H1 (cell line): ENCODE measurements at regions of chr2 and their contacts with region 1.

Region 1: DNA sequence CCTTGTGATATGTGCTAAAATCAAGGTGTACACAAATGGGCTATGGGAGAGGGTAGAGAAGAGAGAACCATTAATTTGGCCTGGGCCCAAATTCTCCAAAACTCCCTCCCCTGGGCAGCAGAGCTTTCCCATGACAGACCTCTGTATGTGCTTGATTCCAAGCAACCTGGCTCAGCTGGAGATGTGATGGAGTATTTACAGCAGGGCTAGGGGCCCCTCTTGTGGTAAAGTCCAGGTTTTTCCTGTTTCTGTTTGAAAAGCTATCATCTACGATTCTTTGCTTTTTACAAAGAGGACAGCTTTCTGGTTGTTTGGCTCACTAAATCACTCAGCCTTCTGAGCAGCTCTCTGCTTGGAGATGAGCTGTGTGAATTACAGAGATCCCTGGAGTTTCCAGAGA is 40.3 kb downstream of the KCNS3 start:
- DNase-seq: no peak
- H3K4me3 ChIP-seq: no peak overlapping the region
- H3K27ac ChIP-seq: no peak overlapping the region
- H3K4me1 ChIP-seq: peaks cover 2 to 11% (median 5%) of the 10 kb centered on the region in 4 experiments; a peak in 5 of 7 replicates
- H3K27me3 ChIP-seq: no peaks in the 10 kb centered on the region
- CTCF ChIP-seq: peak in 2 of 3 experiments; percentile 38 to 52; a peak in 3 of 4 replicates
- EP300 ChIP-seq: no peak
- POLR2A ChIP-seq: no peak
- RAD21 ChIP-seq: peak; percentile 77 to 85

Region 2: GRCh38 chr2:17780546-17780945 is 138.2 kb before region 1 on chr2:
- CTCF ChIA-PET with region 1: no interaction called
- POLR2A ChIA-PET with region 1: no interaction called
- DNase-seq: no peak
- H3K4me3 ChIP-seq: no peak overlapping the region
- H3K27ac ChIP-seq: no peak overlapping the region
- H3K4me1 ChIP-seq: no peaks in the 10 kb centered on the region
- H3K27me3 ChIP-seq: no peaks in the 10 kb centered on the region
- CTCF ChIP-seq: no peak
- EP300 ChIP-seq: no peak
- POLR2A ChIP-seq: no peak
- RAD21 ChIP-seq: no peak

Region 3: DNA sequence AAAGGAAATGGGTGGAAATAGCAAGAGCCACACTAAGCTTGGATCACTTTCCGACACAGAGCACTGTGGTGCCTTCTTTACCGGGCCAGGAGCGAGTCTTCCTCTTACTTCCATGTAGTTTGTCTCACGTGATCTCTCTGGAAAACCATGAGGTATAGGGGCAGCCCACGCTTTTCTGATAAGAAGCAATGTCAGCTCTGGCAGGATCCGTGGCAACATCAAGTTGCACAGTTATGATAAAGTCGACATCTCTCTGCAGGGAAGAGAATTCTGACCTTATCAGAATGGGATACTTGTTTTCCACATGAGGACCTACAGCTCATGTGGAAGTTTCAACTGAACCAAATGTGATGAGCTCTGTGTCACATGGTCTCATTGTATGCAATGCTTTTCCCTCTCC is 73.0 kb before region 1 on chr2:
- CTCF ChIA-PET with region 1: interaction called, 76 read pairs
- POLR2A ChIA-PET with region 1: no interaction called
- DNase-seq: no peak
- H3K4me3 ChIP-seq: no peak overlapping the region
- H3K27ac ChIP-seq: no peak overlapping the region
- H3K4me1 ChIP-seq: no peaks in the 10 kb centered on the region
- H3K27me3 ChIP-seq: no peaks in the 10 kb centered on the region
- CTCF ChIP-seq: no peak
- EP300 ChIP-seq: no peak
- POLR2A ChIP-seq: no peak
- RAD21 ChIP-seq: no peak

Region 4: DNA sequence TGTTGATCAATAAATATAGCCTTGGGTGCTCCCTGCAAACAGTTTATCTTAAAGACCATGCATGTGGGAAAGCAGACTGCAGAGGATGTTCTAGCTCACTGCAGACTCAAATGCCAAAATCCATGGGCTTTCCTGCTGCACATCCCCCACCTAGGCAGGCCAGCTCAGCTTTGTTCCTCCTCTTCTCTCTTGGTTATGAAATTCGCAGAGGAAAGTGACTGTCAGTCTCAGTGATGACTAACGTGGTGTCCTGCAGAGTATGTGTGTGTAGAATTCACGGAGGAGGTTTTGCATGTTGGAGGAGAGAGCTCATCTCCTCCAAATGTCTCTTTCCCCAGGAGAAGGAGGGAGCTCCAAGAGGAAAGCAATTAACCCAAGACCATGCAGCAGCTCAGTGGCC is 61.8 kb before region 1 on chr2:
- CTCF ChIA-PET with region 1: interaction called, 76 read pairs
- POLR2A ChIA-PET with region 1: no interaction called
- DNase-seq: no peak
- H3K4me3 ChIP-seq: no peak overlapping the region
- H3K27ac ChIP-seq: no peak overlapping the region
- H3K4me1 ChIP-seq: peaks cover 0 to 3% (median 0%) of the 10 kb centered on the region in 4 experiments; a peak in 1 of 7 replicates
- H3K27me3 ChIP-seq: no peaks in the 10 kb centered on the region
- CTCF ChIP-seq: no peak
- EP300 ChIP-seq: no peak
- POLR2A ChIP-seq: no peak
- RAD21 ChIP-seq: no peak

Region 5: GRCh38 chr2:17863539-17863938 is 55.2 kb before region 1 on chr2:
- CTCF ChIA-PET with region 1: interaction called, 10 read pairs
- POLR2A ChIA-PET with region 1: no interaction called
- DNase-seq: no peak
- H3K4me3 ChIP-seq: no peak overlapping the region
- H3K27ac ChIP-seq: no peak overlapping the region
- H3K4me1 ChIP-seq: no peaks in the 10 kb centered on the region
- H3K27me3 ChIP-seq: no peaks in the 10 kb centered on the region
- CTCF ChIP-seq: no peak
- EP300 ChIP-seq: no peak
- POLR2A ChIP-seq: no peak
- RAD21 ChIP-seq: no peak

Region 6: GRCh38 chr2:17879101-17879912 is 39.5 kb before region 1 on chr2:
- CTCF ChIA-PET with region 1: interaction called, 76 read pairs
- POLR2A ChIA-PET with region 1: interaction called, 3 read pairs
- DNase-seq: peak; percentile 62 to 83
- H3K4me3 ChIP-seq: peak overlapping the region; percentile 78 to 95 (median 88)
- H3K27ac ChIP-seq: peak overlapping the region; percentile 45; the same call in 1 of the 2 replicates
- H3K4me1 ChIP-seq: peaks cover 2 to 18% (median 7%) of the 10 kb centered on the region in 4 experiments
- H3K27me3 ChIP-seq: peaks cover 9 to 21% (median 19%) of the 10 kb centered on the region in 4 experiments
- CTCF ChIP-seq: peak; percentile 19 to 45 (median 39); a peak in 3 of 4 replicates
- EP300 ChIP-seq: no peak
- POLR2A ChIP-seq: peak in 1 of 2 experiments; percentile 21; a peak in 2 of 3 replicates
- RAD21 ChIP-seq: peak; percentile 21 to 41; a peak in 3 of 4 replicates